ENCODE measurements at regions of chr3 and their contacts with region 1.

Region 1: GRCh38 chr3:165805946-165806561 is 31.2 kb downstream of the BCHE start:
- DNase-seq: no peak
- ATAC-seq: no peak

Region 2: GRCh38 chr3:165642761-165643432 is 163.2 kb before region 1 on chr3:
- intact Hi-C with region 1: loop called in 1 of 2 experiments (anchors 10 kb)
- DNase-seq: peak in 1 of 2 donors; percentile 13
- ATAC-seq: peak; percentile 86

Region 3: DNA sequence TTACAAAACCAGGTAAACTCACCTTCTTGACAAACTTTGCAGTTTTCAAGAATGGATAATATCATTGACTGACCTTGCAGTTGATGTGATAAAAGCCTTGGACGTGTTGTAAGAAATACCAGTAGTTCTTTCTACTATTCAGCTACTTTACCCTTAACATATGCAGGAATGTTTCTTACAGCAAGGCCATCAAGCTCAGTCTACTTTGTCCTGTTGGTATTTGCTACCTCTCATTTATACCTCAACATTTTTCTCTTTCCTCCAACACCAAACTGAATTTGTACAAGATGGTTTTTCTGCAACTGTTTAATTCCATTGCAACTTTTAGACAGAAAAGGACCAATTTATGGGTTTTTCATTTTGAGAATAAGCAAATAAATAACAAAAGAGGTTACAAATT is 178.5 kb after region 1 on chr3:
- intact Hi-C with region 1: no loop called
- DNase-seq: no peak
- ATAC-seq: no peak

Measured in left colon (tissue), 2 donors.